HepG2 (cell line): ENCODE measurements at regions of chr7 and their contacts with region 1.

Region 1: DNA sequence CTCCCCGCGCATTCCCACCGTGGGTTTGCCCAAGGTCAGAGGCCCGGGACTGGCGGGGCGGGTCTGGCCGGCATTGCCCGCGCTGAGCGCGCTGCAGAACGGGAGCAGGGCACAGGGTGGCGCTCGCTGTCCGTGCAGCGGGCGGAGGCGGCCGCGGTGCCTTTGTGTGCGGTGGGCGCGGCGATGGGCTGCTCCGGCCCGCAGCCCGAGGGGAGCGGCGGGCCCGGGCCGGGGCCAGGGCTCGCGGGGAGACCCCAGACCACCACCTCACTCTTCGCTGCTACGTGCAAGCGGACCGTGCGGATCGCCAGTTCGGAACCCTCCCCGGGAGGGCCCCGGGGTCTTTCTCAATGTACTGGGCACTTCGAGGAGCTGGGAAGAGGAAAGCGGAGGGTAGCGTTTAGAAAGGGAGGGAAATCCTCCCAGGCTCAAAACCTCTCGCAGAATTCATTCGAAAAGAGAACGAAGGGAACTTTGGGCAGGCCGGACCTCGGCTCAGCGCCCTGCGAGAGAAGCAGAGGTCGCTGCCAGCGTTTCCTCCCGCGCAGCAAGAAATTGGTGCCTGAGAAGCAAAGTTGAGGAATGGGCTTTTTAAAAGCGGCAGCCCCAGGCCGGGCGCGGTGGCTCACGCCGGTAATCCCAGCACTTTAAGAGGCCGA is 8.5 kb downstream of the SP8 start:
- DNase-seq: no peak
- ATAC-seq: peak; percentile 100
- H3K4me3 ChIP-seq: peak overlapping the region; percentile 32 to 60 (median 48); a peak in 5 of 6 replicates
- H3K27ac ChIP-seq: no peak overlapping the region
- H3K4me1 ChIP-seq: peaks cover 5% of the 10 kb centered on the region; the same call in 1 of the 2 replicates
- H3K27me3 ChIP-seq: peaks cover 2 to 12% of the 10 kb centered on the region in 2 experiments; a peak in 3 of 5 replicates
- CTCF ChIP-seq: peak; percentile 85
- EP300 ChIP-seq: no peak
- POLR2A ChIP-seq: no peak
- RAD21 ChIP-seq: peak; percentile 95

Region 2: GRCh38 chr7:20834656-20835055 is 56.5 kb after region 1 on chr7:
- CTCF ChIA-PET with region 1: no interaction called
- POLR2A ChIA-PET with region 1: no interaction called
- in situ Hi-C with region 1: no loop called
- intact Hi-C with region 1: loop called (anchors 1 kb)
- DNase-seq: no peak
- ATAC-seq: no peak
- H3K4me3 ChIP-seq: no peak overlapping the region
- H3K27ac ChIP-seq: no peak overlapping the region
- H3K4me1 ChIP-seq: no peaks in the 10 kb centered on the region
- H3K27me3 ChIP-seq: no peaks in the 10 kb centered on the region
- CTCF ChIP-seq: no peak
- EP300 ChIP-seq: no peak
- POLR2A ChIP-seq: no peak
- RAD21 ChIP-seq: no peak

Region 3: DNA sequence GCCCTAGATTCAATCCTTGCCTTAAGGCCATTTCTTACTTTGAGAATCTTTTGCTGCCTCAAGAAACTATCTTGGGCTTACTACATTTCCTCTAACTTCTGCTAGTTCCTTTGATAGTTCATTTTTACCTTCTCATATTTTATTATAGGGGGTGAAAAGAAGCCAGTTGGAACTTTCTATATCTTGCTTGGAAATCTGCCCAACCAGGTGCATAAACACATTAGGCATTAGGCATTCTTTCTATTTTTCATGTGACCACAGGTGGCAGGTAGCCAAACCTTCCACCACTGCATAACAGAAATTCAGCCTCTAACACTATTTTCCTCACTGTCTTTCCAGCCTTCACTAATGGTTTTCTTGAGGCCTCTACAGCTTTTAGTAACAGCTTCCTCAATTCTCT is 308.5 kb after region 1 on chr7:
- CTCF ChIA-PET with region 1: no interaction called
- POLR2A ChIA-PET with region 1: no interaction called
- in situ Hi-C with region 1: no loop called
- intact Hi-C with region 1: no loop called
- DNase-seq: no peak
- ATAC-seq: no peak
- H3K4me3 ChIP-seq: no peak overlapping the region
- H3K27ac ChIP-seq: no peak overlapping the region
- H3K4me1 ChIP-seq: no peaks in the 10 kb centered on the region
- H3K27me3 ChIP-seq: 0 out of 5 replicates have a peak, but pooled peaks cover 0 to 1% of the 10 kb centered on the region in 2 experiments
- CTCF ChIP-seq: no peak
- EP300 ChIP-seq: no peak
- POLR2A ChIP-seq: no peak
- RAD21 ChIP-seq: no peak

Region 4: GRCh38 chr7:21253740-21254687 is 475.8 kb after region 1 on chr7:
- CTCF ChIA-PET with region 1: interaction called, 20 read pairs
- POLR2A ChIA-PET with region 1: no interaction called
- in situ Hi-C with region 1: loop called (anchors 5 kb)
- intact Hi-C with region 1: loop called (anchors 1 kb)
- DNase-seq: peak; percentile 48
- ATAC-seq: peak; percentile 98
- H3K4me3 ChIP-seq: no peak overlapping the region
- H3K27ac ChIP-seq: no peak overlapping the region
- H3K4me1 ChIP-seq: peaks cover 5% of the 10 kb centered on the region; the same call in 1 of the 2 replicates
- H3K27me3 ChIP-seq: peaks cover 0 to 11% of the 10 kb centered on the region in 2 experiments; a peak in 1 of 5 replicates
- CTCF ChIP-seq: peak; percentile 81
- EP300 ChIP-seq: no peak
- POLR2A ChIP-seq: no peak
- RAD21 ChIP-seq: 0 out of 2 replicates have a peak, but pooled peaks have one; percentile 51